SK-N-SH (cell line): ENCODE measurements at regions of chr11 and their contacts with region 1.

Region 1: DNA sequence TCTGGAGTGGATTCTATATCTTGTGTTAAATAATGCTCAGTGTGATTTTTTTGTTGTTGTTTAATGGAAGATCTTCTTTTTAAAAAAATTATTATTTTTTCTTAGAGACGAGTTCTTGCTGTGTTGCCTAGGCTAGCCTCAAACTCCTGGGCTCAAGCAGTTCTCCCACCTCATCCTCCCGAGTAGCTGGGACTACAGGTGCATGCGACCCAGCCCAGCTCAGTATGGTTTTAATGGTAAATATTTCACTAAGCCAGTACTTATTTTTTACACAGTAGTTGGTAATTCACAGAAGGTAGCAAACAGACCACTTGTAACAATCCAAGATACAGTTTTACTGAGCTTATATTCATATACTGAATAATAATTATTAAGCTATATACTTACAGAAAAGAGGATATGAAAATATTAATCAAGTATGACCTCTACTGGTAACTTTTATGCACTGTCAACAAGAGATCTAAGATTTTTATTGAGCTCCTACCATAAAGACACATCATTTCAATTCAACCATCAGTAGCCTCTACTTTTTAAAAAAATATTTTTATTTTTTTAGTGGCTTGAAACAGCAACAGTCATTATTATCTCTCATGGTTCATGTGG is 6.1 kb upstream of the CD59 start:
- DNase-seq: peak; percentile 20
- H3K4me3 ChIP-seq: no peak overlapping the region
- H3K27ac ChIP-seq: no peak overlapping the region
- H3K4me1 ChIP-seq: peaks cover 3 to 4% of the 10 kb centered on the region in 2 experiments; a peak in 3 of 4 replicates
- H3K27me3 ChIP-seq: no peaks in the 10 kb centered on the region
- CTCF ChIP-seq: peak; percentile 73
- EP300 ChIP-seq: no peak
- RAD21 ChIP-seq: peak; percentile 59

Region 2: DNA sequence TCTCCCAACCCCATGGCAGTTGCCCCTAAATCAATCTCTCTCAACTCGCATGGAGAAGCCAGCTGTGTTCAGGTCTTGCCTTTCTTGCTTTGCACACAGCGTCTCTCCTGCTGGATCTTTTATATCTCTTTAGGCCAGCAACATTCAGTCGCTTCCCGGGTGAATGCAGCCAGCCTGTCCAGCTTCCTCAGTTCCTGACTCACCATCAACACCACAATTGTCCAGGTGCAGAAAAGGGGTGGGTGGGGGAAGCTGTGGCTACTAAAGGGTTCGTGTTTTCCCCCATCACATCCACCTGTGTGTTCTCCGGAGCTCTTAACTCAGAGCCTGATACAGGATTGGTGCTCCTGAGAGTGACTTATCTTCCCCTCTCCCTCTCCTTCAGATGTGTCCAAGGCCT is 368.7 kb before region 1 on chr11:
- CTCF ChIA-PET with region 1: interaction called, 11 read pairs
- POLR2A ChIA-PET with region 1: no interaction called
- DNase-seq: no peak
- H3K4me3 ChIP-seq: no peak overlapping the region
- H3K27ac ChIP-seq: peak overlapping the region in 1 of 2 experiments; percentile 94; a peak in 2 of 4 replicates
- H3K4me1 ChIP-seq: peaks cover 7 to 60% of the 10 kb centered on the region in 2 experiments; a peak in 3 of 4 replicates
- H3K27me3 ChIP-seq: no peaks in the 10 kb centered on the region
- CTCF ChIP-seq: no peak
- EP300 ChIP-seq: no peak
- RAD21 ChIP-seq: no peak

Region 3: GRCh38 chr11:33695051-33695566 is 47.2 kb before region 1 on chr11:
- CTCF ChIA-PET with region 1: interaction called, 20 read pairs
- POLR2A ChIA-PET with region 1: interaction called, 5 read pairs
- DNase-seq: no peak
- H3K4me3 ChIP-seq: no peak overlapping the region
- H3K27ac ChIP-seq: peak overlapping the region; percentile 31 to 60; a peak in 3 of 4 replicates
- H3K4me1 ChIP-seq: peaks cover 31 to 59% of the 10 kb centered on the region in 2 experiments
- H3K27me3 ChIP-seq: no peaks in the 10 kb centered on the region
- CTCF ChIP-seq: no peak
- EP300 ChIP-seq: no peak
- RAD21 ChIP-seq: no peak

Region 4: GRCh38 chr11:33716236-33716635 is 26.1 kb before region 1 on chr11:
- CTCF ChIA-PET with region 1: interaction called, 31 read pairs
- POLR2A ChIA-PET with region 1: no interaction called
- DNase-seq: peak; percentile 23
- H3K4me3 ChIP-seq: no peak overlapping the region
- H3K27ac ChIP-seq: peak overlapping the region in 1 of 2 experiments; percentile 21; a peak in 1 of 4 replicates
- H3K4me1 ChIP-seq: peaks cover 4 to 20% of the 10 kb centered on the region in 2 experiments; a peak in 3 of 4 replicates
- H3K27me3 ChIP-seq: no peaks in the 10 kb centered on the region
- CTCF ChIP-seq: peak; percentile 56
- EP300 ChIP-seq: no peak
- RAD21 ChIP-seq: peak; percentile 61

Region 5: DNA sequence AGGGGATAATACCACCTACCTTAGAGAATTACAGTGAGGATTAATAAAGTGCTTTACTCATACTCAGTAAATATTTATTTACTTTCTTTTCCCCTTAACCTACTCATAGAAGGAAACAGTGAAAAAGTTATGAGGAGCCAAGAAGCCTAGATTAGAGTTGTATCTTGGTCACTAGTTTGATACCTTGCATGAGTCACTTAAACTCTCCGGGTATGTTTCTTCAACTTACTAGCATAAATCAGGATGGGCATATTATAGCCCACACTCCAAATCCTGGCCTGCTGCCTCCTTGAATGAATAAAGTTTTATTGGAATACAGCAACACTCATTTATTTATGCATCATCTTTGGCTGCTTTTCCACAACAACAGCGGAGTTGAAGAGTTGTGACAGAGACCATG is 23.7 kb after region 1 on chr11:
- CTCF ChIA-PET with region 1: interaction called, 10 read pairs
- POLR2A ChIA-PET with region 1: no interaction called
- DNase-seq: no peak
- H3K4me3 ChIP-seq: no peak overlapping the region
- H3K27ac ChIP-seq: no peak overlapping the region
- H3K4me1 ChIP-seq: no peaks in the 10 kb centered on the region
- H3K27me3 ChIP-seq: no peaks in the 10 kb centered on the region
- CTCF ChIP-seq: no peak
- EP300 ChIP-seq: no peak
- RAD21 ChIP-seq: no peak